Heart right ventricle (tissue), 16 donors: ENCODE measurements at regions of chr19 and their contacts with region 1.

Region 1: DNA sequence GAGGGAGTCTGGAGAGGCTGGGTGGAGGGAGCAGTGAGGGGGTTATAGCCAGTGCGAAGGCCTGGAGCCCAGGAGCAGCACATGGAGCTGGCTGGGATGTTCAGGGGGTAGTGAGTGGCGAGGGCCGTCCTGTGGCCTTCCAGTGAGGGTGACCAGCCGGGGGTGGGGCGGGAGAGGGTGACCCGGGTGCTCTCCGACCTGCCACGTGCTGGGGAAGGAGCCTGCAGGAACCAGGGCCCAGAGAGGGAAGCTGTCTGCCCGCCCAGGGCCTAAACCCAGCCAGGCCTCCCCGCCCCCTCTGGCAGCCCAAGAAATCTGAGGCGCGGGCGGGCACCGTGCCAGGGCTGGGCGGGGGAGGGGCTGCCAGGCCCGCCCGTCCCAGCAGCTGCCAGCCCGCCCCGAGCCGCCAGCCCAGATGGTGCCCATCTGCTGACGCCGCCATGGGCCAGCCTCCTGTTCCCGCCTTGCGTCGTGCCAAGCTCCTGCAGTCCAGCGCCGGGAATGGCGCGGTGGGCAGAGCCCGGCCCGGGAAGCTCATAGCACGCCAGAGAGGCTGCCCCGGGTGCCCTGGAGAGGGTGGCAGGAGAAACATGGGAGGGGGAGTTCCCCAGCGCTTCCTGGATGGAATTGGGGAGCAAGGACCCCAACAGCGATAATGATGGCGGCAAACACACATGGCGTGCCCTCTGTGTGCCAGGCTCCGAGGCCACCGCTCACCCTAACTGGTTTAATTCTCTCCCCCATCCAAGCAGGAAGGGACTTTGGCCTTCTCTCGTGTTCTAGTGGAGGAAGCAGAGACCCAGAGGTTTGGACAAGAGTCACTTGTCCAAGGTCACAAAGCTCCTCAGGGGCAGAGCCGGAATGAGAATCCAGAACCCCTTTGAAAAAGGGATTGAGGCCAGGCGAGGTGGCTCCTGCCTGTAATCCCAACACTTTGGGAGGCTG is 21.5 kb downstream of the NFIC start:
- DNase-seq: peak; percentile 79 to 88
- ATAC-seq: peak; percentile 74 to 90 (median 80)
- H3K4me3 ChIP-seq: peak overlapping the region in 1 of 10 donors; percentile 10
- H3K27ac ChIP-seq: peak overlapping the region; percentile 64 to 95 (median 82)
- H3K4me1 ChIP-seq: peaks cover 52 to 86% (median 76%) of the 10 kb centered on the region in 9 donors
- H3K27me3 ChIP-seq: no peaks in the 10 kb centered on the region
- CTCF ChIP-seq: no peak

Region 2: GRCh38 chr19:3375221-3376090 is 12.5 kb before region 1 on chr19:
- intact Hi-C with region 1: loop called in 1 of 10 experiments (anchors 1 kb)
- DNase-seq: peak; percentile 84 to 89
- ATAC-seq: peak; percentile 81 to 90 (median 86)
- H3K4me3 ChIP-seq: peak overlapping the region in 8 of 10 donors; percentile 0 to 27 (median 24)
- H3K27ac ChIP-seq: peak overlapping the region; percentile 74 to 95 (median 90)
- H3K4me1 ChIP-seq: peaks cover 11 to 73% (median 45%) of the 10 kb centered on the region in 9 donors
- H3K27me3 ChIP-seq: no peaks in the 10 kb centered on the region
- CTCF ChIP-seq: no peak

Region 3: GRCh38 chr19:3642987-3643673 is 255.2 kb after region 1 on chr19:
- intact Hi-C with region 1: no loop called
- DNase-seq: no peak
- ATAC-seq: peak in 1 of 8 donors; percentile 7
- H3K4me3 ChIP-seq: no peak overlapping the region
- H3K27ac ChIP-seq: no peak overlapping the region
- H3K4me1 ChIP-seq: peaks cover 0 to 12% (median 2%) of the 10 kb centered on the region in 9 donors
- H3K27me3 ChIP-seq: no peaks in the 10 kb centered on the region
- CTCF ChIP-seq: no peak